GM12878 (cell line): ENCODE measurements at regions of chr10 and their contacts with region 1.

Region 1: GRCh38 chr10:83871187-83872081 is 267.9 kb upstream of the GHITM start:
- DNase-seq: peak; percentile 47
- ATAC-seq: peak; percentile 99
- H3K4me3 ChIP-seq: no peak overlapping the region
- H3K27ac ChIP-seq: no peak overlapping the region
- H3K4me1 ChIP-seq: no peaks in the 10 kb centered on the region
- H3K27me3 ChIP-seq: no peaks in the 10 kb centered on the region
- CTCF ChIP-seq: peak; percentile 95
- EP300 ChIP-seq: no peak
- POLR2A ChIP-seq: no peak
- RAD21 ChIP-seq: peak; percentile 100

Region 2: GRCh38 chr10:82796510-82796909 is 1074.9 kb before region 1 on chr10:
- CTCF ChIA-PET with region 1: interaction called, 23 read pairs
- POLR2A ChIA-PET with region 1: no interaction called
- RAD21 ChIA-PET with region 1: interaction called, 22 read pairs
- SMC1A ChIA-PET with region 1: interaction called, 12 read pairs
- in situ Hi-C with region 1: no loop called
- intact Hi-C with region 1: loop called (anchors 1 kb)
- DNase-seq: no peak
- ATAC-seq: peak; percentile 77
- H3K4me3 ChIP-seq: no peak overlapping the region
- H3K27ac ChIP-seq: no peak overlapping the region
- H3K4me1 ChIP-seq: no peaks in the 10 kb centered on the region
- H3K27me3 ChIP-seq: no peaks in the 10 kb centered on the region
- CTCF ChIP-seq: peak; percentile 17 to 47 (median 22); a peak in 3 of 6 replicates
- EP300 ChIP-seq: no peak
- POLR2A ChIP-seq: no peak
- RAD21 ChIP-seq: peak; percentile 79

Region 3: DNA sequence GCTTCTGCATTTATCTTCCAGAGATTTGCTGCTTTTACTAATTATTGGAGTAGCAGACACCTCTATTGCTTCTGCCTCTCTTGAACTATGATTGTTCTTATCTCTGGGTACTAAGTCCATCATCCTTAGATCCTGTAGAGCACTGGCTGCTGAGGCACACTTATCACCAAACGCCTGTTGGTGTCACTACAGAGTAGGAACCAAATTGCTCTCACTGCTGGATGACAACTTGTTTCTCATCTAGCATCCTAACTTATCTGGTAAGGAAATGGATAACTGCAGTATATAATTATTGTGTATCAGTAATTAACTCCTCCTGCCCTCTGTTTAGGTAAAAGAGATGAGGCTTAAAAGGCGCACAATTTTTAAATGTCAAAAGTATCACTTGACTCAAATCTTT is 937.0 kb before region 1 on chr10:
- CTCF ChIA-PET with region 1: no interaction called
- POLR2A ChIA-PET with region 1: no interaction called
- RAD21 ChIA-PET with region 1: no interaction called
- SMC1A ChIA-PET with region 1: no interaction called
- in situ Hi-C with region 1: no loop called
- intact Hi-C with region 1: loop called (anchors 1 kb)
- DNase-seq: no peak
- ATAC-seq: peak; percentile 90
- H3K4me3 ChIP-seq: no peak overlapping the region
- H3K27ac ChIP-seq: no peak overlapping the region
- H3K4me1 ChIP-seq: no peaks in the 10 kb centered on the region
- H3K27me3 ChIP-seq: no peaks in the 10 kb centered on the region
- CTCF ChIP-seq: peak; percentile 19 to 31 (median 28); a peak in 4 of 6 replicates
- EP300 ChIP-seq: no peak
- POLR2A ChIP-seq: no peak
- RAD21 ChIP-seq: peak; percentile 48; the same call in 1 of the 2 replicates

Region 4: GRCh38 chr10:83425313-83425712 is 446.1 kb before region 1 on chr10:
- CTCF ChIA-PET with region 1: interaction called, 5 read pairs
- POLR2A ChIA-PET with region 1: no interaction called
- RAD21 ChIA-PET with region 1: interaction called, 5 read pairs
- SMC1A ChIA-PET with region 1: interaction called, 7 read pairs
- in situ Hi-C with region 1: no loop called
- intact Hi-C with region 1: loop called (anchors 1 kb)
- DNase-seq: no peak
- ATAC-seq: peak; percentile 47; the same call in 2 of the 3 replicates
- H3K4me3 ChIP-seq: no peak overlapping the region
- H3K27ac ChIP-seq: no peak overlapping the region
- H3K4me1 ChIP-seq: no peaks in the 10 kb centered on the region
- H3K27me3 ChIP-seq: no peaks in the 10 kb centered on the region
- CTCF ChIP-seq: peak in 1 of 3 experiments; percentile 8; a peak in 1 of 6 replicates
- EP300 ChIP-seq: no peak
- POLR2A ChIP-seq: no peak
- RAD21 ChIP-seq: peak; percentile 45

Region 5: DNA sequence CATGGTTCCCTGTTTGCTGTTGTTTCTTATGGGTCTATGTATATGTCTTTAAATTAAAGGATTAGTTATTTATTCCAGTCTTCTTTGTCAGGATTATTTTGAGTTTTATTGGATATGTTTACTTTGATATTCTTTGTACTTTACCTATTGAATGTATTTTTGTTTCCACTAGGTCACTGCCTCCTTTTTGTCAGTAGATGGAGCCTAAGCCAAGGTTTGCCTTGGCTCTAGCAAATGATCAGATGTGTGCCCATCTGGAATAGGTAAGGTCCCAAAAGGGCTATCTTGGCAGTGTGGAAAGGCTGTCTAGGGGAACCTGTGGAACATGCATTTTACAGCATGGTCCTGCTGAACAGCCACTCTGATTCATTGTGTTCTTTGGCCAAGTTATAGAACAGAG is 69.5 kb before region 1 on chr10:
- CTCF ChIA-PET with region 1: interaction called, 11 read pairs
- POLR2A ChIA-PET with region 1: interaction called, 3 read pairs
- RAD21 ChIA-PET with region 1: interaction called, 4 read pairs
- SMC1A ChIA-PET with region 1: interaction called, 3 read pairs
- in situ Hi-C with region 1: no loop called
- intact Hi-C with region 1: no loop called
- DNase-seq: no peak
- ATAC-seq: no peak
- H3K4me3 ChIP-seq: no peak overlapping the region
- H3K27ac ChIP-seq: no peak overlapping the region
- H3K4me1 ChIP-seq: no peaks in the 10 kb centered on the region
- H3K27me3 ChIP-seq: no peaks in the 10 kb centered on the region
- CTCF ChIP-seq: peak; percentile 10 to 28 (median 26); a peak in 2 of 6 replicates
- EP300 ChIP-seq: no peak
- POLR2A ChIP-seq: no peak
- RAD21 ChIP-seq: peak; percentile 35; the same call in 1 of the 2 replicates

Region 6: GRCh38 chr10:83917537-83918506 is 46.4 kb after region 1 on chr10:
- CTCF ChIA-PET with region 1: no interaction called
- POLR2A ChIA-PET with region 1: no interaction called
- RAD21 ChIA-PET with region 1: no interaction called
- SMC1A ChIA-PET with region 1: no interaction called
- in situ Hi-C with region 1: no loop called
- intact Hi-C with region 1: no loop called
- DNase-seq: peak; percentile 32
- ATAC-seq: peak; percentile 93
- H3K4me3 ChIP-seq: no peak overlapping the region
- H3K27ac ChIP-seq: no peak overlapping the region
- H3K4me1 ChIP-seq: peaks cover 4% of the 10 kb centered on the region
- H3K27me3 ChIP-seq: no peaks in the 10 kb centered on the region; a peak in 1 of 4 replicates
- CTCF ChIP-seq: peak; percentile 22 to 40 (median 30); a peak in 4 of 6 replicates
- EP300 ChIP-seq: no peak
- POLR2A ChIP-seq: no peak
- RAD21 ChIP-seq: peak; percentile 13; the same call in 1 of the 2 replicates

Region 7: GRCh38 chr10:83991986-83992753 is 120.7 kb after region 1 on chr10:
- CTCF ChIA-PET with region 1: interaction called, 14 read pairs
- POLR2A ChIA-PET with region 1: no interaction called
- RAD21 ChIA-PET with region 1: no interaction called
- SMC1A ChIA-PET with region 1: no interaction called
- in situ Hi-C with region 1: no loop called
- intact Hi-C with region 1: no loop called
- DNase-seq: peak; percentile 55
- ATAC-seq: peak; percentile 67
- H3K4me3 ChIP-seq: no peak overlapping the region
- H3K27ac ChIP-seq: peak overlapping the region; percentile 22
- H3K4me1 ChIP-seq: peaks cover 25% of the 10 kb centered on the region
- H3K27me3 ChIP-seq: no peaks in the 10 kb centered on the region; a peak in 1 of 4 replicates
- CTCF ChIP-seq: peak; percentile 60 to 66 (median 63)
- EP300 ChIP-seq: no peak
- POLR2A ChIP-seq: no peak
- RAD21 ChIP-seq: peak; percentile 55

Region 8: GRCh38 chr10:84026544-84027257 is 155.3 kb after region 1 on chr10:
- CTCF ChIA-PET with region 1: interaction called, 11 read pairs
- POLR2A ChIA-PET with region 1: no interaction called
- RAD21 ChIA-PET with region 1: interaction called, 3 read pairs
- SMC1A ChIA-PET with region 1: no interaction called
- in situ Hi-C with region 1: no loop called
- intact Hi-C with region 1: loop called (anchors 5 kb)
- DNase-seq: no peak
- ATAC-seq: 0 out of 3 replicates have a peak, but pooled peaks have one; percentile 31
- H3K4me3 ChIP-seq: no peak overlapping the region
- H3K27ac ChIP-seq: no peak overlapping the region
- H3K4me1 ChIP-seq: no peaks in the 10 kb centered on the region
- H3K27me3 ChIP-seq: no peaks in the 10 kb centered on the region
- CTCF ChIP-seq: peak; percentile 62 to 88 (median 80)
- EP300 ChIP-seq: no peak
- POLR2A ChIP-seq: no peak
- RAD21 ChIP-seq: peak; percentile 77

Region 9: DNA sequence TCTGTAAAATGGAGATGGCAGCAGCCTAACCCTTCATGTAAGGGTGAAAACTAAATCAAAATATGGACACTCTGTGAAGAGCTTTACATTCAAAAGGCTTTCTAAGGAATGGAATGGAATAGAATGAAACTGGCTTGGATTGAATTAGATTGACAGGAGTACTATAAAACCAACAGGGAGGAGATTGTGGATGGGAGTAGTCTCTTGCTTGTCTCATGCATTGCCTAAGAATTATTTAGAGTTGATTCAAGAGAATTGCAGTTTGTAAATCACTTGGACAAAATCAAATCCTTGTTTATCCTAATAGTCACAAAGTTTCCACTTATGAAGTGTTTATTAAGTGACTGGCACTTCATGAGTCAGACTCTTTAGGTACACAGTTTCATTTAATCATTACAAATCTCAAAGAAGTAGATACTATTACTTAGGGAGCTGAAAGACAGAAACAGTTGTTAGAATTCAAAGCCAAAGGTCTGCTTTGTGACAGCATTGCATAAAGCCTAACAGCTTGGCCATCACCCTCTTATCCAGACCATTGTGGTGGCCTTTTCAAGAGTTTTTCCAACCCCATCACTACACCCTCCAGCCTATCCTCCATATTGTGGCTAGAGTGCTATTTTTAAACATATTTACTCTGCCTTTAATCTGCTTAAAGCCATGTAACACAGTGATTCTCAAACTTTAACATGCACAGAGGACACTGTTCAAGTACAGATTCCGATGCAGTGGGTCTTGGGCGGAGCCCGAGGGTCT is 176.0 kb after region 1 on chr10:
- CTCF ChIA-PET with region 1: no interaction called
- POLR2A ChIA-PET with region 1: no interaction called
- RAD21 ChIA-PET with region 1: no interaction called
- SMC1A ChIA-PET with region 1: no interaction called
- in situ Hi-C with region 1: no loop called
- intact Hi-C with region 1: no loop called
- DNase-seq: no peak
- ATAC-seq: no peak
- H3K4me3 ChIP-seq: no peak overlapping the region
- H3K27ac ChIP-seq: no peak overlapping the region
- H3K4me1 ChIP-seq: no peaks in the 10 kb centered on the region
- H3K27me3 ChIP-seq: no peaks in the 10 kb centered on the region; a peak in 1 of 4 replicates
- CTCF ChIP-seq: no peak
- EP300 ChIP-seq: no peak
- POLR2A ChIP-seq: no peak
- RAD21 ChIP-seq: no peak

Region 10: GRCh38 chr10:84523526-84523925 is 652.1 kb after region 1 on chr10:
- CTCF ChIA-PET with region 1: no interaction called
- POLR2A ChIA-PET with region 1: no interaction called
- RAD21 ChIA-PET with region 1: no interaction called
- SMC1A ChIA-PET with region 1: no interaction called
- in situ Hi-C with region 1: no loop called
- intact Hi-C with region 1: no loop called
- DNase-seq: no peak
- ATAC-seq: no peak
- H3K4me3 ChIP-seq: no peak overlapping the region
- H3K27ac ChIP-seq: no peak overlapping the region
- H3K4me1 ChIP-seq: no peaks in the 10 kb centered on the region
- H3K27me3 ChIP-seq: no peaks in the 10 kb centered on the region
- CTCF ChIP-seq: no peak
- EP300 ChIP-seq: no peak
- POLR2A ChIP-seq: no peak
- RAD21 ChIP-seq: no peak